Activated CD8-positive, alpha-beta T cell treated with anti-CD3 and anti-CD28 coated beads for 36 hours (primary cell): ENCODE measurements at regions of chr17 and their contacts with region 1.

Region 1: DNA sequence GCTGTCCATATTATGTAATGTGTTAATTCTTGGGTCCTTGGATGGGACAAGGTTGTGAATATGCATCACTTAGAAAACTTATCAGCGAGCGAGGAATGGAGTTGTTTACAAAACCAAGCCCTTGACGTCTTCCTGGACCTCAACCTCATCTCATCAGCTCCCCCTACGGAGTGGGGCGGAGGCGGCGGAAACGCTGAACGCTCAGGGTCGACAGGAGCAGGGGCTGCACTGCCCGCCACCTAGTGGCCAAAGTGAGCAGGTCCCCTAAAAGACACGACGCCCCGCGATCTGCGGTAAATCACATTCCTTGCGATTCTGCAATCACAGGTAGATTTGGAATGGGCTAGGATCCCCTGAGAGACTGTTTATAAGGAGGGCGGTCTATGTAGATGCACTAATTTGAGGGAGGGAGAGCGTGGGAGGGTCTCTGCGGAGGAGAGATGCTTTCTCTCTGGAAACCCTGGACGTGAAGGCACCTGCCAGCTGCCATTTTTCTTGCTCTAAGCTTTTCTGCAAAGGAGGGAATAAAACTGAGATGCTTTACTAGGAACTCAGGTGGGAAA is 5.4 kb upstream of the ICAM2 start:
- DNase-seq: peak; percentile 96
- ATAC-seq: peak; percentile 77
- H3K4me3 Mint-ChIP-seq: peak overlapping the region; percentile 65
- H3K27ac Mint-ChIP-seq: peak overlapping the region; percentile 85
- H3K4me1 Mint-ChIP-seq: peaks cover 58% of the 10 kb centered on the region
- H3K27me3 Mint-ChIP-seq: no peaks in the 10 kb centered on the region
- CTCF ChIP-seq: peak; percentile 97

Region 2: DNA sequence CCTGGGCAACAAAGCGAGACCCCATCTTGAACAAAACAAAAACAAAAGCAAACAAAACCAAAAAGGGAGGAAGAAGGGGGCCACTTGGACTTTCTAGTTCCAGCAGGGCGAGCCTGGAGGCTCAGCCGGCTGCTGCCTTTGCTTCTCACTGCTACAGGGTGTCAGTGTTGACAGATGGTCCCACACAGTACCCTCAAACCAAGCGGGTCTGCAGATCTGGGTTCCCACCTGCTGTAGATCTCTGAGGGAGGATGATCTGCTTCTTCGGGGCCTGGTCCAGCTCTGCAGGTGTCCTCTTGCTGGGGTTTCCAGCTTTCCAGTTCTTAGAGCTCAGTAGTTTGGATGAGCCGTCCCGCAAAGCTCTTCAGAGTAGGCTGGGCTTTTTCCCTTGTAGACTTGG is 121.5 kb before region 1 on chr17:
- CTCF ChIA-PET with region 1: interaction called, 16 read pairs
- POLR2A ChIA-PET with region 1: no interaction called
- intact Hi-C with region 1: no loop called
- DNase-seq: no peak
- ATAC-seq: no peak
- H3K4me3 Mint-ChIP-seq: no peak overlapping the region
- H3K27ac Mint-ChIP-seq: no peak overlapping the region
- H3K4me1 Mint-ChIP-seq: peaks cover 8% of the 10 kb centered on the region
- H3K27me3 Mint-ChIP-seq: peaks cover 3% of the 10 kb centered on the region
- CTCF ChIP-seq: no peak

Region 3: DNA sequence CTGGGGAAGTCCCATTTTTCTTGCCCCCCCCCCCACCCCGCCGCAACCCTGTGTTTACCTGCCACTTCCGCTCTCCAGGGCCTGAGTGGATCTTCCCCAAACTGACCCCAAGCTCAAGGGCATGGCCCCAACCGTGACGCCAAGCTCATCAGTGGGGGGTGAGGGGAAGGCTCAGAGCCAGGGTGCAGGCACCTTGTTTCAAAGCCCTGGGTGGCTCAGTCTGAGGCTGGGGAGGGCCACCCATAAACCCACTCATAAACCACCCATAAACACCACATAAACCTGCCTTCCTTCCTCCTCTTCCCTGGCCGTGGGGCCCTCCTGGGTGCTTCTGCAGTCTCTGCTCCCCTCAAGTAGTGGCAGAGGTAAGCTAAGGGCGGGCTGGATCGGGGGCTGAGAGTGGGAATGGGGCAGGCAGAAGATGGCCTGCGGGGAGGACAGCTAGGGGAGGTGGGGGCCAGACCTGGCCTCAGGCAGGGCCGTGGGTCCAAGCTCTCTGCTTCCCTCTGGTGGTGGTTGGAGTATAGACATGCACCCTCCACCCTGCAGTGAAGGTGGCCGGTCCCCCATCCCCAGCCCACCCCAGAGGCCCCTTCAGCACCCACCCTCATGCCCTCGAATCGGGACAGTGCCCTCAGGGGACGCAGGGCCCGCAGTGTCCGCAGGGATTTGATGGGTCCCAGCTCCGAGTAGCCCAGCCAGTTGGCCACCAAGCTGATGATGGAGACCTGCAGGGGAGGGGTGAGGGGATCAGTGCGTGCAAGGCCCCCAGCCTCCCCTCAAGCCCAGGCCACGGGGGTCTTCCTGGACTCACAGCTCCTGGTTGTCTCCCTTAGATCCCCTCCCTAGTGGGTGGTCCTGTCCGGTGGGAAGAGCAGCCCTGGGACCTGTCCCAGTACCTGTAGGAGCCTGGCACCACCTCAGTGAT is 79.1 kb before region 1 on chr17:
- CTCF ChIA-PET with region 1: interaction called, 25 read pairs
- POLR2A ChIA-PET with region 1: interaction called, 4 read pairs
- intact Hi-C with region 1: no loop called
- DNase-seq: peak; percentile 74
- ATAC-seq: peak; percentile 92
- H3K4me3 Mint-ChIP-seq: peak overlapping the region; percentile 50
- H3K27ac Mint-ChIP-seq: peak overlapping the region; percentile 77
- H3K4me1 Mint-ChIP-seq: peaks cover 20% of the 10 kb centered on the region
- H3K27me3 Mint-ChIP-seq: no peaks in the 10 kb centered on the region
- CTCF ChIP-seq: peak; percentile 89

Region 4: GRCh38 chr17:64051153-64051552 is 25.3 kb after region 1 on chr17:
- CTCF ChIA-PET with region 1: interaction called, 32 read pairs
- POLR2A ChIA-PET with region 1: no interaction called
- intact Hi-C with region 1: no loop called
- DNase-seq: no peak
- ATAC-seq: peak; percentile 95
- H3K4me3 Mint-ChIP-seq: no peak overlapping the region
- H3K27ac Mint-ChIP-seq: peak overlapping the region; percentile 81
- H3K4me1 Mint-ChIP-seq: peaks cover 29% of the 10 kb centered on the region
- H3K27me3 Mint-ChIP-seq: no peaks in the 10 kb centered on the region
- CTCF ChIP-seq: no peak

Region 5: DNA sequence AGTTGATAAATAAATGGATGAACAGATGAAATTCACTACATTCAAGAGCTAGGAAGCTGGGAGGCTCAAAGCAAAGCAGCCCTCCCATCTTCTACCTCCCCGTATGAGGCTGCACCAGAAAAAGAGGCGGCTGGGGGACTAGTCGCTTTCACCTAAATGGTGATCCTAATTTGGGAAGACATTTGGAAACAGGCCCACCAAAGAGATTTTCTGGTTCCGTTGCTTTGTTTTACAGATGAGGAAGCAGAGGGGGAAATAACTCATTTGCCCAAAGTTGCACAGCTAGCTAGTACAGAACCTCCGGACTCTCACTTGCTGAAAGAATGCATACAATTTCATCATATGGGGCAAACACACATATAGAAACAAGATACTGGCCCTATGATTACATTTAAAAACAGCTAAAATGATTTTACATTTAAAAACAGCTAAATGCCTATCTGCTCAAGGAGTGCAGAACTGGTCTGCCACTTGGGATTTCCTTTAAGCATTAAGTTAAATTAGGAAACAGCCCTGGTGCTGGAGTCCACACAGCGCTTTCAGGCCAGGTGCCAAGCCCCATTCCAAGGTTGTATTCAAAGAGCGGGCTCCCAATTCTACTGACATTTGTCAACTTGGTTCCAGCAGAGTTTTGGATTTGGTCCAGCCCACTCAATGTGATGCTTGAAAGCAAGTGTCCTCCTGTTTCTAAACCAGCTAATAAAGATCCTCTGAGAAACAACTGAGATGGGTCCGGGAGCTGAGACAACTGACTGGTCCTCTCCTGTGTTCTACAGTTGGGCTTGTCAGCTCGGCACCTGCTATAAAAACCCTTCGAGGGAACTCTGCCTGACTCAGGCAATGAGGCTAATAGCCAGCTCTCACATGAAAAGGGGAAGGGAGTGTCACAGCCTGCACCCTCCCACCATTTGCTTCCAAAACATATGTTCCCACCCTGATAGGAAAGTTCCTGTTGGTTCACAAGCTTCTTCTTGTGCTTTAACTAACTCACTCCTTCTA is 92.5 kb after region 1 on chr17:
- CTCF ChIA-PET with region 1: interaction called, 18 read pairs
- POLR2A ChIA-PET with region 1: interaction called, 4 read pairs
- intact Hi-C with region 1: no loop called
- DNase-seq: no peak
- ATAC-seq: no peak
- H3K4me3 Mint-ChIP-seq: no peak overlapping the region
- H3K27ac Mint-ChIP-seq: peak overlapping the region; percentile 82
- H3K4me1 Mint-ChIP-seq: peaks cover 75% of the 10 kb centered on the region
- H3K27me3 Mint-ChIP-seq: no peaks in the 10 kb centered on the region
- CTCF ChIP-seq: no peak

Region 6: DNA sequence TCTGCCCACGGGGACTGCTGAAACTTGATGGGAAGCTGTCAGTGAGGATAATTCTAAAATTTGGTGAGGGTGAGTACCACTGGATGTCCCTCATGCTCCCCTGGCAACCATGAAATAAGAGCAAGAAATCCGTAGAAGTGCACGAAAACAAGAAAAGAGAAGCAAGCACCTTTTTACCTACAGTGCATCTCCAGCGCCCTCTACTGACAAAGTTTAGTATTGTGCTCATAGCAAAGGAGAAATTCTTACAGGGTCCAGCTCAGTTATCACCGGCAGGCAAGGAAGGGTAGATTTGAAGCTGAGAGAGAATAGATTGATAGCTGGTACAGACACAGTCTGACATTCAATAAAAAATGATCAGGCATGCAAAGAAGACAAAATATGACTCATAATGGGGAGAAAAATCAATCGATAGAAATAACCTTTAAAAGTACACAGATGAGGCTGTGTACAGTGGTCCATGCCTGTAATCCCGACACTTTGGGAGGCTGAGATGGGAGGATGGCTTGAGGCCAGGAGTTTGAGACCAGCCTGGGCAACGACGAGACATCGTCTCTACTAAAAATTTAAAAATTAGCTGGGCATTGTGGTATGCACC is 265.5 kb after region 1 on chr17:
- CTCF ChIA-PET with region 1: interaction called, 21 read pairs
- POLR2A ChIA-PET with region 1: interaction called, 4 read pairs
- intact Hi-C with region 1: no loop called
- DNase-seq: peak; percentile 17
- ATAC-seq: no peak
- H3K4me3 Mint-ChIP-seq: no peak overlapping the region
- H3K27ac Mint-ChIP-seq: no peak overlapping the region
- H3K4me1 Mint-ChIP-seq: no peaks in the 10 kb centered on the region
- H3K27me3 Mint-ChIP-seq: no peaks in the 10 kb centered on the region
- CTCF ChIP-seq: peak; percentile 74